ENCODE measurements at regions of chr15 and their contacts with region 1.

Region 1: DNA sequence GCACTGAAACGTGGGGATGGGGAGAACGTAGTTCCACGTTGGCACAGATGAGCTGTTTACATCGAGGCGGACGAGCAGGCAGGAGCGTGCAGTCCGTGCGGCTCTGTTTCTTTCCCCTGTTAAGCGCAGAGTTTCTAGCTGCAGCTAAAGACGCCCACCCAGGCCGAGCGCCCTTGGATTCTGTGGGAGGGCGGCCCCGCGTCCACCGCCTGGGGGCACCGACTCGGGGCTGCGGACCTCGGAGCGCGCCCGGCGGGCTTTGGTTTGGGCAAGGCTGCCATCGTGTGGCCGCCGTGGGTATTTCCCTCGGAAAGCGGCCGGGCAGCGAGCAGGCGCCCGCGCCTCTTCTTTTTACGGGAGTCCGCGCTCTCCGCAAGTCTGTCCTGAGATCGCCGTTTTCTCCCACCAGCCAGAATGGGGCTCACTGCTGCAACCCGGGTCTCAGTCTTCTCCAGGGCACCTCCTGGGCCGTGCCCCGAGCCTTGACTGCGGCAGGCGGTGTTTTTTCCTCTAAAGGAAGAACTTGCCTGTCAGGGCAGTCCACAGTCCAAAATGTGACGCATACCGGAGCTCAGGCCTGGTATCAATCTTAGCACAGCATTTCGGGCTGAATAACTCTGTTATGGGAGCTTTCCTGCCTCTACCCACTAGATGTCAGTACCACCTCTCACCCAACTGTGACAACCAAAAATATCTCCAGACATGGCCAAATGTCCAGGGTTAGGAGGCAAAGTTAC is 219.9 kb upstream of the IGF1R start:
- DNase-seq: peak; percentile 62 to 67
- ATAC-seq: peak; percentile 67 to 96 (median 83)
- H3K4me3 ChIP-seq: no peak overlapping the region
- H3K4me3 Mint-ChIP-seq: peak overlapping the region; percentile 52
- H3K27ac ChIP-seq: no peak overlapping the region
- H3K27ac Mint-ChIP-seq: no peak overlapping the region
- H3K4me1 ChIP-seq: peaks cover 8% of the 10 kb centered on the region
- H3K4me1 Mint-ChIP-seq: peaks cover 12 to 22% of the 10 kb centered on the region in 2 donors
- H3K27me3 ChIP-seq: peaks cover 6% of the 10 kb centered on the region
- H3K27me3 Mint-ChIP-seq: peaks cover 42 to 54% of the 10 kb centered on the region in 2 donors
- CTCF ChIP-seq: peak; percentile 82

Region 2: GRCh38 chr15:98000249-98001196 is 427.9 kb before region 1 on chr15:
- intact Hi-C with region 1: no loop called
- DNase-seq: no peak
- ATAC-seq: peak in 2 of 3 donors; percentile 21 to 26
- H3K4me3 ChIP-seq: no peak overlapping the region
- H3K4me3 Mint-ChIP-seq: no peak overlapping the region
- H3K27ac ChIP-seq: no peak overlapping the region
- H3K27ac Mint-ChIP-seq: no peak overlapping the region
- H3K4me1 ChIP-seq: no peaks in the 10 kb centered on the region
- H3K4me1 Mint-ChIP-seq: peaks cover 6 to 8% of the 10 kb centered on the region in 2 donors
- H3K27me3 ChIP-seq: no peaks in the 10 kb centered on the region
- H3K27me3 Mint-ChIP-seq: peaks cover 0 to under 1% of the 10 kb centered on the region in 2 donors
- CTCF ChIP-seq: no peak

Region 3: DNA sequence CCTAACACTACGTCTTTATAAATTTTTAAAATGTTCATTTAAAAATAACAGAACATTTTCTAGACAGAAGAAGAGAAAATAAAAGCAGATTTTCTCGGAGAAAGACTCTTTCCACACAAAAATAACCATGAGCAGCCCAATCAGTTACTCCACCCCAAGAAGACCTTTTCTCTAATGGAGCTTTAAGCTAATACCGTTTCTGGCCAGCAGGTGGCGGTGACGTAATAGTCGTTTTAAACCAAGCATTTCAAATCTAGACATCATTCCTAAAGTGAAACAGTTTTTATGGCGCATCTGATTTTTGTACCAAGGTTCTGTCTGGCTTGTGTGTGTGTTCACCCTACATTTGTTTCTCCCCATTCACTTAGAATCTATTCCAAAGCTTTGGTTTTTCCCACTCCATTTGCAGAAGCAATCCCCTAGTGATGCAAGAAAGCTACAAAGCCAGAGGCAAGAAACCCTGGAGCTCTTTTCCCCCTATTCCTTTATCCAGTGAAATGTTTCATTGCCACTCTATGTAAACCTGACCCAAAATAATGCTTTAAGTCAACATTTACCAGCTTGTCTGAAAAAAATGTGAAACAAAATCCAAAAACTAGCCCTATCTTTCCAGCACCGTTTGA is 116.7 kb before region 1 on chr15:
- intact Hi-C with region 1: loop called (anchors 2 kb)
- DNase-seq: peak; percentile 62 to 72
- ATAC-seq: peak in 2 of 3 donors; percentile 59 to 71
- H3K4me3 ChIP-seq: no peak overlapping the region
- H3K4me3 Mint-ChIP-seq: no peak overlapping the region
- H3K27ac ChIP-seq: no peak overlapping the region
- H3K27ac Mint-ChIP-seq: no peak overlapping the region
- H3K4me1 ChIP-seq: no peaks in the 10 kb centered on the region
- H3K4me1 Mint-ChIP-seq: peaks cover 0 to 5% of the 10 kb centered on the region in 2 donors
- H3K27me3 ChIP-seq: no peaks in the 10 kb centered on the region
- H3K27me3 Mint-ChIP-seq: peaks cover 15 to 16% of the 10 kb centered on the region in 2 donors
- CTCF ChIP-seq: peak; percentile 90

Region 4: GRCh38 chr15:98560338-98560737 is 131.9 kb after region 1 on chr15:
- intact Hi-C with region 1: no loop called
- DNase-seq: no peak
- ATAC-seq: no peak
- H3K4me3 ChIP-seq: no peak overlapping the region
- H3K4me3 Mint-ChIP-seq: no peak overlapping the region
- H3K27ac ChIP-seq: no peak overlapping the region
- H3K27ac Mint-ChIP-seq: no peak overlapping the region
- H3K4me1 ChIP-seq: no peaks in the 10 kb centered on the region
- H3K4me1 Mint-ChIP-seq: no peaks in the 10 kb centered on the region
- H3K27me3 ChIP-seq: no peaks in the 10 kb centered on the region
- H3K27me3 Mint-ChIP-seq: peaks cover 0 to 12% of the 10 kb centered on the region in 2 donors
- CTCF ChIP-seq: no peak